ENCODE measurements at regions of chr4 and their contacts with region 1.

Region 1: DNA sequence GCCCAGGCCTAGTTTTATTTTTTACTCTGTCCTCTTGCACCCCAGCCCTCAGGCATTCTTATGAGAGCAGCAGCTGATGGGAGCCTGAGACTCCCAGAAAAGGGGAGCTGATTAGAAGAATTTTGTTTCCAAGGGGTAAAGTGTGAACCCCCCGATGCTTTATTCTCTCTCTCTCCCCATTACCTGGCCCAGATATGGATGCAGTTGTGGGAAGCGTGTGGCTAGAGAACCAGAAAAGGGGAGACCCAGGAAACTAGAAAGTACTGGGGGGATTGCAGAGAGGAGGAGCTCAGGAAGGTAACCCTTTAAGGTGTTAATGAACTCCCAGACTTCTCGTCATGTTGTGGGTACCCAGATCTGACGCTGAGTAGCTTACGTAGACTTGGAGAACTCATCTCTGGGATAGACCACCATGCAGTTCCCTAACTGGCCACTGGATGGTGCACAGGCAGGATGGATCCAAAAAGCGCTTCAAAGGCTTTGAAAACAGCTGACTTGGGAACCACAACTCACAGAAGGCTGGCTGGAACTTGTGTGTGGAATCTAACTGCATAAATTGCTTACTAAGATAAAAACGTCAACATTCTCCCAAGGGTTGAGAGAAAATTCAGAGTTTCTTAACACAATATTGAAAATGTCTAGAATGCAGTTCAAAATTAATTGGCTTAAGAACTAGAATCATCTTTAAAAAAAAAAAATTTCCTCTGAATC is 64.7 kb downstream of the TBC1D14 start:
- DNase-seq: no peak
- H3K4me3 ChIP-seq: no peak overlapping the region
- H3K27me3 ChIP-seq: no peaks in the 10 kb centered on the region
- CTCF ChIP-seq: peak; percentile 97

Region 2: DNA sequence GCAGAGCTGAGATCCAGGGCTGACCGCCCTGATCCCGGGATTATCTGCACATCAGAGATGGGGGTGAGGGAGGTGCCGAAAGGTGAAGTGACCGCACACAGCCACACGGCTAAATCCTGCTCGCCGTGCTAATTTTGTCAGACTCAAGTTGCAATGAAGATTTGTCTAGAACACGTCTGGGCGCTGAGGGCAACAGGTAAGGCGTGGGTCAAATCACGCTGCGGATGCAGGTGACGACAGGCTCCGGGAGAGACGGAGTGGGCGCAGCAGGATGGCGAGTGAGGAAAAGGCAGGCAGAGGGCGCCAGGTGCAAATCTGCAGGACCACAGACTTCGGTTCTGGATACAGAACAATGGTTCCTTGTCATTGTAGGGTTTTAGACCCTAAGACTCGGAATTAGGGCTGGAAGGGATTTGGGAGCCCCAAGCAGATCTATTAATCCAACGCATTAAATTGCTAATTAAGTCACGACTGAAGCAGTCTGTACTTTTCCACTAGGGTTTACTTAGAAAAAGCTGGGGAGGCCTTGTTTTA is 66.6 kb before region 1 on chr4:
- CTCF ChIA-PET with region 1: interaction called, 14 read pairs
- POLR2A ChIA-PET with region 1: no interaction called
- DNase-seq: no peak
- H3K4me3 ChIP-seq: no peak overlapping the region
- H3K27me3 ChIP-seq: peaks cover 3% of the 10 kb centered on the region; the same call in 1 of the 2 replicates
- CTCF ChIP-seq: peak; percentile 52

Region 3: DNA sequence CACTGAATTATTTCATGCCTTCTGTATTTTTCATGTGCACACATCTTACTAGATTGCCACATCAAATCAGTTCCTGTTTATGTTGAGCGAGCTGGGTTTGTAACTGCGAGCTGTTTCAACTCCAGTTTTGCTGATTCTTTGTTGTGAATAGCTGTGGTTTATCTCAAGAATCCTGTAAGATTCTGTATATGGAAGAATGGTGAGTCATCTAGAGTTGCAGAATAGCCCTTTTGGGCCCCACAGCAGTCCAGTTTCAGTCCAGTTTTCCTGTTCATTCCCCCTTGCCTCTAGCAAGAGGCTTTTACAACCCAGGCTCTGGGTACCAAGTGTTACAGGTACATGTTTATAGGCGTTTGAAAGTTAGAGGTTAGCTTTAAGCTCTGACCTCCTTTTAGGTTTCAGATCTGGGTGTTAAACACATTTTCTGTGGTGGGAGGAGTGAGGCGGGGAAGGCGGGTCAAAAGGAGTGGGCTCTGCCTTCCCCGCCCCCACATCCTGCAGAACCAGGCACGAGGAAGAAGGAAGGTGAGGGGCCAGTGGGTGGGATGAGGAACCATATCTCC is 32.0 kb before region 1 on chr4:
- CTCF ChIA-PET with region 1: interaction called, 17 read pairs
- POLR2A ChIA-PET with region 1: no interaction called
- DNase-seq: peak; percentile 94
- H3K4me3 ChIP-seq: no peak overlapping the region
- H3K27me3 ChIP-seq: no peaks in the 10 kb centered on the region
- CTCF ChIP-seq: no peak

Region 4: GRCh38 chr4:6963139-6963611 is 11.1 kb before region 1 on chr4:
- CTCF ChIA-PET with region 1: interaction called, 21 read pairs
- POLR2A ChIA-PET with region 1: no interaction called
- DNase-seq: no peak
- H3K4me3 ChIP-seq: no peak overlapping the region
- H3K27me3 ChIP-seq: no peaks in the 10 kb centered on the region
- CTCF ChIP-seq: no peak

Region 5: DNA sequence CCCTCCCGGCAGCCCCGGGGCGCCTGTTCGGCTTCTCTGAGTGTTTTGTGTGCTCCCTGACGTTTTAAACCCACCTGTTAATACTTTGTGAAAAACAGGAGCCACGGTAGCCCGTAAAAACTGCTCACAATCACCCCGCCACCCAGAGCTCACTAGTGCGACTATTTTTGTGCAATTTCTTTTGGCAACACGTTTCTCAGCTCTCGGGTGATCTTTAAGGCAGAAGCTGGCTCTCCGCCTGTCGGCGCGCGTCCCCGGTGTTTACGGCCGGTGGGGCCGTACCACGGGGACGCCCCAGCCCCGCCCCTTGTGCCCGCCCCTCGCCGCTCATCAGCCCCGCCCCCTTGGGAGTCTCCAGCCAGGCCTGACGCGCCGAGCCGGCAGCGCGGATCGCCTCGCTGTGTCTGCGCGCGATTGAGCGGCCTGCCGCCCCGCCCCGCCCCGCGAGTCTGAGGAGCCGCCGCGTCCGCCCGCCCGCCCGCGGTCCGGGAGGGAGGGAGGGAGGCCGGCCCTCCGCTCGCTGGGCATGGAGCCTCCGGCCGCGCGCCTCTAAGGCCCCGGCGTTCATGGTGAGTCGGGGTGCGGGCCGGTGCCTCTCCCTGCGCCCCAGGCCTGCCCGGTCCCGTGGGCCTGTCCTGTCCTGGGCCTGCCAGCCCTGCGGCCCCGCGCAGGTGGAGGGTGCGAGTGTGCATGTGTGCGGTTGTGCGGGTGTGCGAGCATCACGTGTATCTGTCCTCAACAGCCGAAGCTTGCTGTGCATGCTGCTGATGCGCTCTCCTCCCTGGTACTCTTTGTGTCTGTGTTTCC is 12.7 kb after region 1 on chr4:
- CTCF ChIA-PET with region 1: interaction called, 25 read pairs
- POLR2A ChIA-PET with region 1: no interaction called
- DNase-seq: no peak
- H3K4me3 ChIP-seq: peak overlapping the region; percentile 91
- H3K27me3 ChIP-seq: no peaks in the 10 kb centered on the region
- CTCF ChIP-seq: peak; percentile 15; the same call in 1 of the 2 replicates

Region 6: GRCh38 chr4:7042697-7043464 is 68.6 kb after region 1 on chr4 and contains the start of gene TADA2B:
- CTCF ChIA-PET with region 1: interaction called, 21 read pairs
- POLR2A ChIA-PET with region 1: no interaction called
- DNase-seq: peak; percentile 79
- H3K4me3 ChIP-seq: peak within 1 kb of the TSS; percentile 96
- H3K27me3 ChIP-seq: no peaks in the 10 kb centered on the region
- CTCF ChIP-seq: no peak
- polyA plus RNA-seq, gene TADA2B: 6.1 and 7.3 TPM in 2 replicates

Region 7: DNA sequence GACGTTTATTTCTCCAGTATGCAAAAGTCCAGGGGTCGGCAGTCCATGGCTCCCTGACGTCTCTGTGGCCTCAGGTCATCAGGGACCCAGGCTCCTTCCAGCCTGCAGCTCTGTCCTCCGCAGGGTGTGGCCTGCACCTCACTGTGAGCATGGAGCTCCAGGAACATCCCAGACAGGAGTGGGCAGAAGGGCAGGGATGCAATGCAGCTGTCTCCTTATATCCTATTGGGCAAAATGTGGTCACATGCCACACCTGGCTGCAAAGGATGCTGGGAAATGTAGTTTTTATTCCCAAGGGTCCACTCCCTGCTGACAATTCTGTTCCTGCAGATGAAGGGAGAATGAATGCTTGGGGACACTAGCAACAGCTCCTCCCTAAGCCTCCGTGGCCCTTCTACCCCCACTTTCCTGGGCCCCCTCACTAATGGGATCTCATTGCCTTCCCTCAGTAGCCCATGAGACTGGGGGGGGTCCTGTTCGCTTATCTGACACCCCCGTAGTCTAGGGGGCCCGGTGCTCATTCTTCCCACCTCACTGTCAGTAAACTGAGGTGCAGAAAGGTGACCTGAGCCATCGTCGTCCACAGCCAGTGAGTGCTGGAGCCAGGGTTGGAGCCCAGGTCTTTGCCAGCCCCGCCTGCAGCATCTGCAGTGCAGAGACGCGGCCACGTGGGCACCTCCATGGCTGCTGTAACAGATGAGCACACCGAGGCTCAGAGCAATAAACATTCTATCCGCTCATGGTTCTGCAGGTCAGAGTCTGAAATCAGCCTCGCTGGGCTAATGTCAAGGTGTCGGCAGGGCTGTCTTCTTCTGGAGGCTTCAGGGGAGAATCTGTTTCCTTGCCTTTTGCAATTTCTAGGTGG is 99.5 kb after region 1 on chr4:
- CTCF ChIA-PET with region 1: interaction called, 116 read pairs
- POLR2A ChIA-PET with region 1: no interaction called
- DNase-seq: no peak
- H3K4me3 ChIP-seq: no peak overlapping the region
- H3K27me3 ChIP-seq: no peaks in the 10 kb centered on the region
- CTCF ChIP-seq: no peak

Measured in BJ (cell line).